ENCODE measurements at regions of chr2 and their contacts with region 1.

Region 1: GRCh38 chr2:105118960-105119359 is 81.1 kb downstream of the MRPS9 start:
- DNase-seq: peak in 1 of 2 donors; percentile 42
- H3K4me3 ChIP-seq: no peak overlapping the region
- H3K27ac ChIP-seq: no peak overlapping the region
- H3K4me1 ChIP-seq: no peaks in the 10 kb centered on the region
- H3K27me3 ChIP-seq: no peaks in the 10 kb centered on the region
- CTCF ChIP-seq: no peak
- POLR2A ChIP-seq: no peak

Region 2: GRCh38 chr2:105235388-105236054 is 116.6 kb after region 1 on chr2:
- intact Hi-C with region 1: loop called (anchors 5 kb)
- DNase-seq: no peak
- H3K4me3 ChIP-seq: no peak overlapping the region
- H3K27ac ChIP-seq: no peak overlapping the region
- H3K4me1 ChIP-seq: no peaks in the 10 kb centered on the region
- H3K27me3 ChIP-seq: no peaks in the 10 kb centered on the region
- CTCF ChIP-seq: peak; percentile 15 to 52 (median 46)
- POLR2A ChIP-seq: no peak

Region 3: GRCh38 chr2:106095478-106096298 is 976.7 kb after region 1 on chr2:
- intact Hi-C with region 1: no loop called
- DNase-seq: peak in 1 of 2 donors; percentile 58
- H3K4me3 ChIP-seq: no peak overlapping the region
- H3K27ac ChIP-seq: no peak overlapping the region
- H3K4me1 ChIP-seq: no peaks in the 10 kb centered on the region
- H3K27me3 ChIP-seq: no peaks in the 10 kb centered on the region
- CTCF ChIP-seq: no peak
- POLR2A ChIP-seq: no peak